Activated T-helper 1 cell treated with anti-CD3 and anti-CD28 coated beads, Interleukin-12 subunit alpha, Interleukin-12 subunit beta, Interleukin-2, Interleukin-4 antibody, amounts not matched to agents 30 ng/mL and 10 ng/mL and 1 ng/mL, durations not matched to agents 14 hours and 24 hours and 36 hours (primary cell): ENCODE measurements at regions of chr17 and their contacts with region 1.

Region 1: GRCh38 chr17:7851438-7852256 is 3.2 kb upstream of the TMEM88 start:
- DNase-seq: peak; percentile 91
- H3K4me3 Mint-ChIP-seq: peak overlapping the region; percentile 65
- H3K27ac Mint-ChIP-seq: peak overlapping the region; percentile 34
- H3K4me1 Mint-ChIP-seq: peaks cover 16% of the 10 kb centered on the region
- H3K27me3 Mint-ChIP-seq: no peaks in the 10 kb centered on the region

Region 2: GRCh38 chr17:7589204-7589868 is 262.3 kb before region 1 on chr17:
- intact Hi-C with region 1: no loop called
- DNase-seq: peak; percentile 52
- H3K4me3 Mint-ChIP-seq: no peak overlapping the region
- H3K27ac Mint-ChIP-seq: no peak overlapping the region
- H3K4me1 Mint-ChIP-seq: peaks cover 15% of the 10 kb centered on the region
- H3K27me3 Mint-ChIP-seq: no peaks in the 10 kb centered on the region

Region 3: GRCh38 chr17:7740481-7741001 is 111.1 kb before region 1 on chr17:
- intact Hi-C with region 1: loop called (anchors 1 kb)
- DNase-seq: no peak
- H3K4me3 Mint-ChIP-seq: no peak overlapping the region
- H3K27ac Mint-ChIP-seq: no peak overlapping the region
- H3K4me1 Mint-ChIP-seq: no peaks in the 10 kb centered on the region
- H3K27me3 Mint-ChIP-seq: peaks cover 17% of the 10 kb centered on the region

Region 4: GRCh38 chr17:7782237-7782636 is 69.4 kb before region 1 on chr17:
- intact Hi-C with region 1: no loop called
- DNase-seq: no peak
- H3K4me3 Mint-ChIP-seq: no peak overlapping the region
- H3K27ac Mint-ChIP-seq: no peak overlapping the region
- H3K4me1 Mint-ChIP-seq: no peaks in the 10 kb centered on the region
- H3K27me3 Mint-ChIP-seq: peaks cover 12% of the 10 kb centered on the region

Region 5: DNA sequence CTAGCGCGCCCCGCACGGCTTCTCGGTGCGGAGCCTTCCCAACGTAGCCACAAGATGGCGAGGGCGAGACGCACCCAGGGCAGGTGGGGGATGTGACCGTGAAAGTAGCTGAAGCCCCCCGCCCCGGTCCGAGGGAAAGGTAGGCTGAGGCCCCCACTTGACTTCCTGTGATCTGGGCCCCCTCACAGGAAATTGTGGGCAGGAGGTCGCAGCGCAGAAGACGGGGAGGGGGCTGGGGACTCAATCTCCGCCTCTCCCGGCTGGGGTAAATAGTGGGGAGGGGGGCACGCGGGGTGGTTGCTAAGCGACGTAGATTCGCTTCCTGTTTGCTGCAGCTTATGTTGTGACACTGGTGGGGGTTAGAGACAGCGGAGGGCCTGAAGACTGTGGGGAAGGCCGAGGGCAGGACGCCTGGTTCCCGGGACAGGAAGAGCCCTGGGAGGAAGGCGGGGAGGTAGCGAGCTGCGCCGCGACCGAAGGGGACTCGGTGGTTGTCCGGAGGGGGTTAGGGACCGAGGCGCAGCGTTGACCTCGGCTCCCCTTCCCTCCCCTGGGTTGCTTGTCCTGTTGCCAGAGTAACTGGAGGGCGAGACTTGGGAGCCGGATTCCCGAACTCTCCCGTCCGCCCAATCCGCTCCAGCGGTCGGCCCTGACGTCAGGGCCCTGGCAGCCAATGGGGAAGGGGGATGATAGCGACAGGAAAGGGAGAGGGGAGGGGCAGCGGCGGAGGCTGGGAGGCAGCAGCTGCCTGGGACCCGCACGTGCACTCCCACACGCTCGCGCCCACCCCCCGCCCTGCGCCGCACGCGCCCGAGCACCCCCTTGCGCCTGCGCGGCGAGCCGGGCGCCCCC is 16.5 kb before region 1 on chr17:
- intact Hi-C with region 1: loop called (anchors 1 kb)
- DNase-seq: peak; percentile 75
- H3K4me3 Mint-ChIP-seq: peak overlapping the region; percentile 96
- H3K27ac Mint-ChIP-seq: peak overlapping the region; percentile 96
- H3K4me1 Mint-ChIP-seq: peaks cover 46% of the 10 kb centered on the region
- H3K27me3 Mint-ChIP-seq: peaks cover 17% of the 10 kb centered on the region